Panc1 (cell line): ENCODE measurements at regions of chr7 and their contacts with region 1.

Region 1: DNA sequence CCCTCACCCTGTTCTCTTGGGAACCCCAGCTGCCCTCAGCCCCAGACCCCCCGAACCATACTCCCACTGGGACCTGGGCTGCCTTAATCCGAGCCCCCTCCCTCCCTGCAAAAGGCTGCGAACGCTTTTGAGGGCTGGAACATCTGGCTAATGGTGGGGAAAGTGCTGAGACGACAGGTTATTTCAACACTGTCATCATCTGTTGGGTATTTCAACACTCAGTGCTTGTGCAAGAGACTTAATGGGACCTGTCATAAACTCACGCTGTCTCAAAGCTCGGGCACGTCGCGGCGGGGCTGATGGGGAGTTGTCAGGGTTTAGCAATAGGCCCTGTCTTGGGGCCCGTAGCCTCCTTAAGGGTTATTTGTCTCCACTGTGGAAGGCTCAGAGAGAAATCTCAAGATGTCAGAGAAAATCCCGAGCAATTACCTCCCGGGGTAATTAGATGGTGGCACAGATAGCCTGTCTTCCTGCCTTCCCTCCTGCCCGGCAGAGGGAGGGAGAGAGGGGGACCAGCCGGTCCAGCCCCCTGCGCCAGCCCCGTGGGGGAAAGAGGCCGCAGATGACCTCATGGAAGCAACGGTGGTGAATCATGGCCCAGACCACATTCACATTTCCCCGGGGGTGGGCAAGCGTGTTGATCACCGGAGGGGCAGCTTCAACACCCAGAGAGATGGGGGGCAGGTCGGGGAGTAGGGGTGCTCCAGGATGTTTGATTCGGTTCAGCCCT is 88.7 kb upstream of the MYL10 start:
- DNase-seq: no peak
- ATAC-seq: no peak
- H3K4me3 ChIP-seq: no peak overlapping the region
- H3K27ac ChIP-seq: no peak overlapping the region
- H3K4me1 ChIP-seq: no peaks in the 10 kb centered on the region
- H3K27me3 ChIP-seq: no peaks in the 10 kb centered on the region
- CTCF ChIP-seq: no peak

Region 2: DNA sequence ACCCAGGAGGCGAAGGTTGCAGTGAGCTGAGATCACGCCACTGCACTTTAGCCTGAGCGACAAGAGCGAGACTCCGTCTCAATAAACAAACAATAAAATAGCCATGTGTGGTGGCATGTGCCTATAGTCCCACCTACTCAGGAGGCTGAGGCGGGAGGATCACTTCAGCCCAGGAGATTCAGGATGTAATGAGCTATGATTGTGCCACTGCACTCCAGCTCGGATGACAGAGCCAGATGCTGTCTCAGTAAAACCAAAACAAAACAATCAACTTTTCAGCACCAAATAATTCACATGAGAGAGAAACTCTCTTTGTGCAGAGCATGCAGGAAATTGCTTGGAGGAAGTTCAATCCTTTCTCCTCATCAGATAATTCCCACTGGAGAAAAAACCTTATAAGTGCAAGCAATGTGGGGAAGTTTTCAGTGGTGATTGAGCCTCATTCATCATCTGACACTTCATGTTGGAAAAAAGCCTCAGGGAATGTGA is 459.5 kb before region 1 on chr7:
- CTCF ChIA-PET with region 1: no interaction called
- POLR2A ChIA-PET with region 1: interaction called, 24 read pairs
- in situ Hi-C with region 1: no loop called
- intact Hi-C with region 1: no loop called
- DNase-seq: no peak
- ATAC-seq: no peak
- H3K4me3 ChIP-seq: no peak overlapping the region
- H3K27ac ChIP-seq: no peak overlapping the region
- H3K4me1 ChIP-seq: no peaks in the 10 kb centered on the region
- H3K27me3 ChIP-seq: no peaks in the 10 kb centered on the region
- CTCF ChIP-seq: no peak

Region 3: DNA sequence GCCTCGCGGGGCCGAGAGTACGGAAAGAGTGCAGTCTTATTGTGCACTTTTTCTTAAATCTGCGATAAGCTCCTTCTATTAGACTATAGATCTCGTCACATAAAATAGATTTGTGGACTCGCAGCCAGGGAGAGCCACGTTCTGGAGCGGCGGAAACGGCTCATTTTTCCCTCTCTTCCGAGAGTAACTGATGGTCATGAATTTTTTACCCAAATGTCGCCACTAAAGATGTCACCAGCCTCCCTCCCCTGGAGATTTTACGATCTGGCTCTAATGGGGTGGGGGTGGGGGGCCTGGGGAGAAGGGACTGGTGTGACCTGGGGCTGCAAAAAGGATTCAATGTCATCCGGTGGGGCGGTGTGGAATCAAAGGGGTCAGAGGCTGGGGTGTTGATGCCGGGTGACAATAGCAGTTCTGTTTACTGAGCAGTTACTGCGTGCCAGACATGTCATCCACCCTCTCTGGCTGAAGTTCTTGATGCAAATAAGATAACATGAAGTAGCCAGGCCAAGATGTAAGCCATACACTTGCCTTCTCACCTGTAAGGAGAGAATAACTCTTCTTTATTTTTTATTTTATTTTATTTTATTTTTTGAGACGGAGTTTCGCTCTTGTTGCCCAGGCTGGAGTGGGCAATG is 17.5 kb before region 1 on chr7:
- CTCF ChIA-PET with region 1: interaction called, 3 read pairs
- POLR2A ChIA-PET with region 1: interaction called, 12 read pairs
- in situ Hi-C with region 1: no loop called
- intact Hi-C with region 1: no loop called
- DNase-seq: no peak
- ATAC-seq: no peak
- H3K4me3 ChIP-seq: no peak overlapping the region
- H3K27ac ChIP-seq: no peak overlapping the region
- H3K4me1 ChIP-seq: 0 out of 2 replicates have a peak, but pooled peaks cover 3% of the 10 kb centered on the region
- H3K27me3 ChIP-seq: no peaks in the 10 kb centered on the region
- CTCF ChIP-seq: no peak

Region 4: GRCh38 chr7:102079140-102080018 is 361.6 kb after region 1 on chr7:
- CTCF ChIA-PET with region 1: no interaction called
- POLR2A ChIA-PET with region 1: interaction called, 19 read pairs
- in situ Hi-C with region 1: no loop called
- intact Hi-C with region 1: no loop called
- DNase-seq: no peak
- ATAC-seq: no peak; the same call in 1 of the 2 replicates
- H3K4me3 ChIP-seq: no peak overlapping the region
- H3K27ac ChIP-seq: no peak overlapping the region
- H3K4me1 ChIP-seq: no peaks in the 10 kb centered on the region
- H3K27me3 ChIP-seq: no peaks in the 10 kb centered on the region
- CTCF ChIP-seq: no peak